Gastrocnemius medialis (tissue), 4 donors: ENCODE measurements at regions of chr6 and their contacts with region 1.

Region 1: DNA sequence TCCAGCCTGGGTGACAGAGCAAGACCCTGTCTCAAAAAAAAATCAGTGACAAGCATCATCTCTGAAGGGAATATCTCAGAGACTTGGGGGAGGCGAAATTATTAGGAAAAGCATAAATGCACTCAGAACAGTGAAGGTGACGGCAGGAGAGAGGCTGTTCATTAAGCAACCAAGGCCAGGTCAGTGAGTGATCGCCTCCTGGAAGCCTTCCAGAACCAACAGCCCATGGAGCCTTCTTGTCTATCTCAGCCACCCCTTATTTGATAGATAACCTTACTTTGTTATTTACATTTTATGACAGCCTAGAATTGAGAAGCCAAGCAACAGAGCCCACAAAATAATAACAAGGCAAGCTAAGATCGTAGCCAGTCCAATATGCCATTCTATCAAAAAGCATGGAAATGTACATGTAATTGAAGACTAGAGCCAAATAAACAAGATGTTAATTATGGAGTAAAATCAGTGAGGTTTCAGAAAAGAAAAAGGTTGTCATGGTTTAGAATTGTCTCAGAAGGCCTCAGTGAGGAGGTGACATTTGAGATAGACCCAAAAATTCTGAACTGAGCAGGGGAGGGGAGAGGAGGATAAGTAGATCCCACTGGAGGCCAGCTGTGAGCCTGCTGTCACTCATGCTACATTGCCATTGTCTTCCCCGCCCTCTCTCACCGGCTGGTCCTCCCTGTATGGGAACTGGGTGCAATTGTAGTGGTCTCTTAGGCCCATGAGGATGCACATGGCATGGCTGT is 17.8 kb downstream of the BNIP5 start:
- DNase-seq: no peak
- ATAC-seq: no peak
- H3K4me3 ChIP-seq: no peak overlapping the region
- H3K27ac ChIP-seq: no peak overlapping the region
- H3K4me1 ChIP-seq: no peaks in the 10 kb centered on the region
- H3K27me3 ChIP-seq: no peaks in the 10 kb centered on the region
- CTCF ChIP-seq: no peak
- POLR2A ChIP-seq: no peak

Region 2: GRCh38 chr6:36340618-36341454 is 22.0 kb after region 1 on chr6:
- in situ Hi-C with region 1: no loop called
- intact Hi-C with region 1: loop called (anchors 1 kb)
- DNase-seq: peak in 1 of 2 donors; percentile 50
- ATAC-seq: peak; percentile 72 to 82
- H3K4me3 ChIP-seq: peak overlapping the region in 1 of 4 donors; percentile 0
- H3K27ac ChIP-seq: peak overlapping the region in 1 of 4 donors; percentile 32
- H3K4me1 ChIP-seq: peaks cover 0 to 4% of the 10 kb centered on the region in 2 donors
- H3K27me3 ChIP-seq: peaks cover 0 to 21% (median 18%) of the 10 kb centered on the region in 3 donors
- CTCF ChIP-seq: peak; percentile 81 to 93 (median 89)
- POLR2A ChIP-seq: no peak

Region 3: DNA sequence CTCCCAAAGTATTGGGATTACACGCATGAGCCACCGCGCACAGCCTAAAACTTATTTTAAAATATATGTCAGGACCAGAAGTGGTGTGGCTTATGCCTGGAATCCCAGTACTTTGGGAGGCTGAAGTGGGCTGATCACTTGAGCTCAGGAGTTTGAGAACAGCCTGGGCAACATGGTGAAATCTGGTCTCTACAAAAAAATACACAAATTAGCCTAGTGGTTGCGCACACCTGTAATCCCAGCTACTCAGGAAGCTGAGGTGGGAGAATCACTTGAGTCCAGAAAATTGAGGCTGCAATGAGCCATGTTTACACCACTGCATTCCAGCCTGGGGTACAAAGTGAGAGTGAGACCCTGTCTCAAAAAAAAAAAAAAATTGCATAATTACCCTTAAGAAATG is 110.0 kb after region 1 on chr6:
- in situ Hi-C with region 1: no loop called
- intact Hi-C with region 1: no loop called
- DNase-seq: no peak
- ATAC-seq: no peak
- H3K4me3 ChIP-seq: no peak overlapping the region
- H3K27ac ChIP-seq: no peak overlapping the region
- H3K4me1 ChIP-seq: no peaks in the 10 kb centered on the region
- H3K27me3 ChIP-seq: no peaks in the 10 kb centered on the region
- CTCF ChIP-seq: peak in 2 of 5 experiments; percentile 34 to 50
- POLR2A ChIP-seq: no peak